ENCODE measurements at regions of chr20 and their contacts with region 1.

Region 1: GRCh38 chr20:43691928-43692524 is 25.1 kb downstream of the MYBL2 start:
- DNase-seq: peak; percentile 76
- H3K4me3 ChIP-seq: no peak overlapping the region
- H3K27ac ChIP-seq: no peak overlapping the region
- H3K4me1 ChIP-seq: peaks cover 8% of the 10 kb centered on the region
- CTCF ChIP-seq: peak; percentile 91

Region 2: DNA sequence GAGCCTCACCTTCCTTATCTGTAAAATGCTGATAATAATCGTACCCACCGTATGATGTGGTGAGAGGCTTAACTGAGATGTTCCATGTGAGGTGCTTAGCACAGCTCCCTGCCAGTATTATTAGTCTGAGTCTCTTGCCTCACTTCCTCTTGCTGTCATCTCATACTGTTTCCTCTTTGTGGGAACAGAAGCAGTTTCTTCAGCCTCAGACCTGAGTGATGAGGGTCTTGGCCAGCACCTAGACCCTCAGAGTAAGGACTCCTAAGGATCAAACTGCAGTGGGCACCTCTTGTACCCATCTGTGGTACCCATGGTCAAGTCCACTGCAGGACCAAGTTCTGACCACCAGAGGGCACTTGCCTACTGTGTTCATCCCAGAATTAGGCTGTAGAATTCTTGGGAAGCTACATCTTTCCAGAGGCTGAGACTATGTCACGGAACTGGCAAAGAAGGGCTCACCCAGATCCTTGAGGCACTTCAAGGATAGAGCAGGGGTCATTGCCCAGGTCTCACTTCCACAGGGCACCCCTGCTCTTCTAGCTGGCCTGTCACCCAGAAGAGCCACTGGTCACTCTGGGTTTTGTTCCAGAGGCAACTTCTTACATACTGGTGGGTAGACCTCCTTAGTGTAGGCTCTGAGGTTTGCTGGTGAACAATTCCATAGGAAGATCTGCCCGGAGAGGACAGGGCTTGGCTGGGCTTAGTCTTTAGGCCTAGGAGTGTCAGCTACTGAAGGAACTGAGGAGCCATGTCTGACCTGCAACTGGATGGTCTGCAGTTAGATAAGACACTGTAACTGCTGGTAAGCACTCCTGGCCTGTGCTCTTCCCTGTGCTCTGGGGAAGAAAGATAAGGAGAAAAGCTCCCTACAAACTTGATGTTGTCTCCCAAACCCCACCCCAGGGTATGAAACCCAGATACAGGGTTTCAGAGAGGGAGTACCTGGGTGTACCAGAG is 153.8 kb before region 1 on chr20:
- CTCF ChIA-PET with region 1: no interaction called
- POLR2A ChIA-PET with region 1: no interaction called
- intact Hi-C with region 1: loop called (anchors 1 kb)
- DNase-seq: peak; percentile 58
- H3K4me3 ChIP-seq: no peak overlapping the region
- H3K27ac ChIP-seq: no peak overlapping the region
- H3K4me1 ChIP-seq: no peaks in the 10 kb centered on the region
- CTCF ChIP-seq: peak; percentile 94

Region 3: GRCh38 chr20:43563429-43563828 is 128.6 kb before region 1 on chr20:
- CTCF ChIA-PET with region 1: no interaction called
- POLR2A ChIA-PET with region 1: no interaction called
- intact Hi-C with region 1: loop called (anchors 10 kb)
- DNase-seq: peak; percentile 36
- H3K4me3 ChIP-seq: no peak overlapping the region
- H3K27ac ChIP-seq: no peak overlapping the region
- H3K4me1 ChIP-seq: no peaks in the 10 kb centered on the region
- CTCF ChIP-seq: peak; percentile 72

Region 4: GRCh38 chr20:43590392-43591323 is 101.4 kb before region 1 on chr20 and contains the start of gene IFT52:
- CTCF ChIA-PET with region 1: no interaction called
- POLR2A ChIA-PET with region 1: no interaction called
- intact Hi-C with region 1: loop called (anchors 1 kb)
- DNase-seq: peak; percentile 95
- H3K4me3 ChIP-seq: peak within 1 kb of the TSS; percentile 83
- H3K27ac ChIP-seq: peak within 1 kb of the TSS; percentile 35
- H3K4me1 ChIP-seq: peaks cover 17% of the 10 kb centered on the region
- CTCF ChIP-seq: no peak; the same call in 1 of the 2 replicates
- total RNA-seq, gene IFT52: 20.6 and 24.7 TPM in 2 replicates

Measured in OCI-LY7 (cell line).